Activated naive CD4-positive, alpha-beta T cell treated with anti-CD3 and anti-CD28 coated beads, Interleukin-2, amount 10 ng/mL, durations not matched to agents 7 days and 5 days (primary cell): ENCODE measurements at regions of chr1 and their contacts with region 1.

Region 1: DNA sequence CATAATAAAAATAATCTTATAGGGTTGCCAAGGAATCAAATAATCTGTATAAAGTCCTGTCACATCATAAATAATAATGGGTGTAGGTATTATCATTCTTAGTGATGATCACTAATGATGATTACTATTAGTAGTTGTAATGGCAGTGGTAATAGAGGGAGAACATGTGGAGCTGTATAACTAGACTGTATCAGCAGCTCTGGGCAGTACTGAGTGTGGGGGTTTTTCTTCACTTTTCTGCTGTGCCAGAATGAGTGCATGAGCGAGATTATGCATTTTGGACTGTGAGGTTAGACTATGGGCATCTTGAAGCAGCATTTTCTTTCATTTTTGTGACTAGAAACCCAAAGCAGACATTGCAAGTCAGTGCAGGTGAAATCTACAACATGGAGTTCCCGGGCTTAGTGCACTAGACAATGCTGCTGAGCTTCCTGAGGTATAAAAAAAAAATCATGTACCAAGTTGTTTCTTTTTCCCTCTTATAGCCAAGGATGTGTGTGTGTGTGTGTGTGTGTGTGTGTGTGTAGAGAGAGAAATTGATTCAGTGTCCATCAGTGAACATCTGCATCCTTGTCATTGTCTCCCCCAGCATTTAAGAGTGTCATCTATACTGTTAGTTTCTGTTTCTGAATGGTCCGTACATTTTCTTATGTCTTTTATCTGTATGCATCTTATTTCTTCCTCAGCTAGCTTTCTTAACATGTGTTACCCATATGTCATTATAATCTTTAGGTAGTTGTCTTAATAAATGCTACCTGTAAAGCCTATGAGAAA is 86.6 kb downstream of the GIPC2 start:
- DNase-seq: no peak
- H3K4me3 Mint-ChIP-seq: no peak overlapping the region
- H3K27ac Mint-ChIP-seq: no peak overlapping the region
- H3K4me1 Mint-ChIP-seq: no peaks in the 10 kb centered on the region
- H3K27me3 Mint-ChIP-seq: peaks cover 5% of the 10 kb centered on the region

Region 2: DNA sequence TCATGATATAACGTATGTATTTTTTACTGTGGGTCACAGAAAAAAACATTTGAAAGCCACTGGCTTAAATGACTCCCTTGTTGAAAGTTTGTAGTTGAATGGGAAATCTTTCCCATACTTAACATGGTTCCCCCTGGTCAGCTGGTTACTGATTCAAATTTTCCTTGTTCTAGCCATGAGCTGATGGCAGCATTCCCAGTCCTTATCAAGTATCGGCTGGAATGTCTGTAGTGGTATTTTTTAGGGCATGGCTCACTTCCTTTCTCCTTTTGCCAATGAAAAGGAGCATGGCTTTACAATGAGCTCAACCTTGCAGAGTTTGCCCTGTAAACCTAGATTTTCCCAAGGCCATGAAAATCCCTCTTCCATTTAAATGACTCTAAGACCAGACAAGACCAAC is 30.8 kb before region 1 on chr1:
- CTCF ChIA-PET with region 1: no interaction called
- DNase-seq: no peak
- H3K4me3 Mint-ChIP-seq: no peak overlapping the region
- H3K27ac Mint-ChIP-seq: no peak overlapping the region
- H3K4me1 Mint-ChIP-seq: no peaks in the 10 kb centered on the region
- H3K27me3 Mint-ChIP-seq: no peaks in the 10 kb centered on the region

Region 3: DNA sequence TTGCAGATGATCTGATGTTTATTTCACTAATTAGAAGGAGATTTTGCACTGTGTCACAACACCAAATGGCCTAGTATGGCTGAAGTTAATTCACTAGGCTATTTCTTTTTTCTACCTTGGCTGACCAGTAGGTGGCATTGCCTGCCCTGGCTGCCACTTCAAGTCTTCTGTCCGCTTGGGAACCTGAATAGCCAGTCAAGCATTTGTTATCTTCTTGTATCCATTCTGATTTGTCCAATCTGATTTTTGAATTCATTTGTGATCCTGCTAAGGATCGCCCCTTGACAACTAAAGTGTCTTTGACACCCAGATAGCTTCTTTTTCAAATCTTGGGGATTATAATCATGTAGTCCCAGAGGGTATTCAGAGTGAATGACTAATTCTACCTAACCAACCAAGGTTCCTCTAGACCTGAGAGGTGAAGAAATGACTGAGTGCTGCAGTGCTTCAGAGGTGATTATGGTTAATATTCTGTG is 12.8 kb after region 1 on chr1:
- CTCF ChIA-PET with region 1: interaction called, 48 read pairs
- DNase-seq: peak; percentile 45
- H3K4me3 Mint-ChIP-seq: no peak overlapping the region
- H3K27ac Mint-ChIP-seq: no peak overlapping the region
- H3K4me1 Mint-ChIP-seq: peaks cover 23% of the 10 kb centered on the region
- H3K27me3 Mint-ChIP-seq: peaks cover 11% of the 10 kb centered on the region

Region 4: DNA sequence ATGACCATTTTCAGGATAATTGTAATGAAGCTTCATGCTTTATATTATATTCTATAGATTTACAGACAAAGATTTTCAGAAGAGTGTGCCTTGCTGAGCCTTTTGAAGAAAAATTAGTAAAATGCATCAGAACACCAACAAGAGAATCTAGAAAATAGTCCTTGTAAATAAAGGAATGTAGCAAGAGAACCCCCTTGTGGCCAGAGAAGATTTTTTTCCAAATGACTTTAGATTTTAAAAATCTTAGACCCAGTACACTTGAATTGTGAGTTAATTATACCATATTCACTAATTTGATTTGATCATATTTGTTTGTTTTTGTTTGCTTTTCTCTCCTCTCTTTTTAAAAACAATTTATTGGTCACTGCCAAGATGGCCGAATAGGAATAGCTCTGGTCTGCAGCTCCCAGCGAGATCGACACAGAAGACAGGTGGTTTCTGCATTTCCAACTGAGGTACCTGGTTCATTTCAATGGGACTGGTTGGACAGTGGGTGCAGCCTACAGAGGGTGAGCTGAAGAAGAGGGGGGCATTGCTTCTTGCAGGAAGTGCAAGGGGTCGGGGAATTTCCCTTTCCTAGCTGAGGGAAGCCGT is 475.1 kb after region 1 on chr1:
- CTCF ChIA-PET with region 1: interaction called, 42 read pairs
- DNase-seq: no peak
- H3K4me3 Mint-ChIP-seq: no peak overlapping the region
- H3K27ac Mint-ChIP-seq: no peak overlapping the region
- H3K4me1 Mint-ChIP-seq: no peaks in the 10 kb centered on the region
- H3K27me3 Mint-ChIP-seq: peaks cover 3% of the 10 kb centered on the region